Activated CD8-positive, alpha-beta T cell treated with anti-CD3 and anti-CD28 coated beads, Interleukin-2, amount 10 ng/mL, durations not matched to agents 7 days and 5 days (primary cell): ENCODE measurements at regions of chr3 and their contacts with region 1.

Region 1: GRCh38 chr3:186790261-186790981 is 7.0 kb downstream of the EIF4A2 start:
- DNase-seq: no peak
- ATAC-seq: peak; percentile 1
- H3K4me3 Mint-ChIP-seq: no peak overlapping the region
- H3K27ac Mint-ChIP-seq: no peak overlapping the region
- H3K4me1 Mint-ChIP-seq: peaks cover 39% of the 10 kb centered on the region
- H3K27me3 Mint-ChIP-seq: no peaks in the 10 kb centered on the region

Region 2: DNA sequence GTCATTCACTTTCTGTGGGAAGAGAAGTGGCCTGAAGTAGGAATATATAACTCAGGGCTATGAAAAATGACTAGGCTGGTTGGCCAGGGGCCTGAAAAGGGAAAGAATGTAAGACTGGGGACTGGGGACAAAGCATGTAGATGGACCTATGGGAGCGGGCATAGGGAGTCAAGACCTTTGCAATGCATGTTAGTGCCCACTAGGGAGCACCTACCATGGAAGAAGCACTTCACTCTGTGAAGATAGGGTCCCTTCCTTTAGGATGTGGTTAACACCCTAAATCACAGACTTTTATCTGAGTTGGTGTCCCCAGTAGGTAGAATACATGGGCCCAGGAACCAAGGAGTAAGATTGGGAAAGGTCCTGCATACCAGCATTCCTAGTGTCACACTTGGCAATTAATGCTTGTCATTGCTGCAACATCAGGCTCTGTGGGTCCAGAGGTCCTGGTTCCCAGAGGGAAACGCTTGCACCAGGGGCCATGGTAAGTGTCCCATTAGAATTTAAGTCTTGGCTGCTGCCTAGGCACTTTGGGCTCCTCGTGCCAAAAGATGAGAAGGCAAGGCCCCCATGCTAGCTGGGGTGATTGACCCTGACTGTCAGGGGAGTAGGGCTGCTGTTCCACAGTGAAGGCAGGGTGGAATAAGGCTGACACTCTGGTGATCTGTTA is 325.9 kb before region 1 on chr3:
- CTCF ChIA-PET with region 1: no interaction called
- POLR2A ChIA-PET with region 1: no interaction called
- DNase-seq: no peak
- ATAC-seq: no peak
- H3K4me3 Mint-ChIP-seq: no peak overlapping the region
- H3K27ac Mint-ChIP-seq: no peak overlapping the region
- H3K4me1 Mint-ChIP-seq: no peaks in the 10 kb centered on the region
- H3K27me3 Mint-ChIP-seq: peaks cover 9% of the 10 kb centered on the region

Region 3: GRCh38 chr3:186705882-186706780 is 84.3 kb before region 1 on chr3:
- CTCF ChIA-PET with region 1: no interaction called
- POLR2A ChIA-PET with region 1: no interaction called
- DNase-seq: peak; percentile 76
- ATAC-seq: peak; percentile 99
- H3K4me3 Mint-ChIP-seq: no peak overlapping the region
- H3K27ac Mint-ChIP-seq: no peak overlapping the region
- H3K4me1 Mint-ChIP-seq: peaks cover 12% of the 10 kb centered on the region
- H3K27me3 Mint-ChIP-seq: peaks cover 58% of the 10 kb centered on the region

Region 4: DNA sequence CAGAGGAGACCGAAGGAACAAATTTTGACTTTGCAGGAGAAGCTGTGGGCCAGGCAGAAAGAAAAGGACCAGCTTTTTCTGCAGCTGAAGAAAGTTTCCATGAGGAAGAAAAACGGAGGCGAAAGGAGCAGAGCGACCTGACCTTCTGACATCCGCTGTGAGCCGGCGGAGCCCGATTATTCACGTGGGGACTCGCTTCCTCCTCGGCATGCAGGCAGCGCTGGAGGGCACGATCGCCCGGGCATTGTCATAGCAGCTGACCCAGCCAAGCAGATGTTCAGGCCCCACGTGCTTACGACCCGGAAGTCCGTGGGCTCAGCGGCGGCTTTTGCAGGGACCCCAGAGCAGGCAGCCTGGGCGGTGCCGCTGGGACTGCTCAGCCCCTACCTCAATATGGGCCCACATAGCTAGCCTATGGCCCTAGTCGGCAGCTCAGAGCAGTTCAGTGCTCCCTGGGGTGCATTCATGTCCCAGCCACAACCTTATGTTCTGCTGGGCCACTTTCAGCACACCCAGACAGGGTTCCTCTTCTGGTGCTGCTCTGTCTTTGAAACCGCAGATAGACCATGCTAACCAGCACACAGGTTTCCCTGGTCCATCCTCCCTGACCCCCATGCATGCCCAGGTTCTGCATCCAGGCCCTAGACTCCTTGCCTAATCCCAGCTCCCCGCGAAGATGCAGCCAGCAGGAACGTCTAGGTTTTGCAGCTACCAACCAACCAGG is 17.6 kb before region 1 on chr3:
- CTCF ChIA-PET with region 1: no interaction called
- POLR2A ChIA-PET with region 1: interaction called, 10 read pairs
- DNase-seq: peak; percentile 80
- ATAC-seq: peak; percentile 94
- H3K4me3 Mint-ChIP-seq: peak overlapping the region; percentile 76
- H3K27ac Mint-ChIP-seq: peak overlapping the region; percentile 88
- H3K4me1 Mint-ChIP-seq: peaks cover 22% of the 10 kb centered on the region
- H3K27me3 Mint-ChIP-seq: peaks cover 3% of the 10 kb centered on the region

Region 5: GRCh38 chr3:186806089-186807055 is 16.0 kb after region 1 on chr3 and contains the start of gene RFC4:
- CTCF ChIA-PET with region 1: interaction called, 4 read pairs
- POLR2A ChIA-PET with region 1: interaction called, 123 read pairs
- DNase-seq: peak; percentile 90
- ATAC-seq: peak; percentile 79
- H3K4me3 Mint-ChIP-seq: peak within 1 kb of the TSS; percentile 96
- H3K27ac Mint-ChIP-seq: peak within 1 kb of the TSS; percentile 96
- H3K4me1 Mint-ChIP-seq: peaks cover 47% of the 10 kb centered on the region
- H3K27me3 Mint-ChIP-seq: no peaks in the 10 kb centered on the region
- total RNA-seq, gene RFC4: 98.9 to 106 TPM